Activated CD4-positive, alpha-beta T cell treated with anti-CD3 and anti-CD28 coated beads, Interleukin-2, amount 10 ng/mL, durations not matched to agents 24 days and 14 days (primary cell): ENCODE measurements at regions of chr12 and their contacts with region 1.

Region 1: DNA sequence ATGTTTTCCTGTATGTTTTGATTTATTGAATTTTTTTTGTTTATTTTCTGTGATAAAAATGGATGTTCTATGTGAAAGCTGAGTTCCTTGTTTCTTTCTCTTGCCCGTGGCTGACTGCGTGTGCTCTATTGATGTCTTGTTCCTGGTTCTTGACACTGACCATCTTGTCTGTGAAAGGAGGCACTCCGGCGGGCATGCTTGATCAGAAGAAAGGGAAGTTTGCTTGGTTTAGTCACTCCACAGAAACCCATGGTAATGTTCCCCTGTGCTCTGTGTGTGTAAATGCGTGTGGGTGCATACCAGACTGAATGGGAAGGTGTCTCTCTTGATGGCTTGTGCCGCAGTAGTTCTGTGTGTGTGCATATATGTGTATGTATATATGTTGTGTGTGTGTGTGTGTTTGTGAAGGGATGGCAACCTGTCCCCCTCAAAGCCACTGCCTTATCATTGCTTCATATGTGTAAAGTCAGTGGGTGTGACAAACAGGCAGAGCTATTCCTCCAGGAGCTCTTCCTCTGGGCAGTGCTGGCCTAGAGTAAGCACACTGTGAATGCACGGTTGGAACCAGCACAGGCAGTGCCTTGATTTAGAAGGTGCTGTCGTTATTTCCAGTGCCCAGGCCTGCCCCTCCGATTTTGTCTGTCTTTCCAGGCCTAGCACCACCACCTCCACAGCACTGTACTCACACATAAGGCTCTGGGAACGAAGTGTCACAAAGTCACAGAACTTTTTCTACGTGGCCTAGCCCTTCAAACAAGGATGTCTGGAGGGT is 247.3 kb upstream of the FKBP4 start:
- DNase-seq: no peak
- H3K4me3 Mint-ChIP-seq: no peak overlapping the region
- H3K27ac Mint-ChIP-seq: no peak overlapping the region
- H3K4me1 Mint-ChIP-seq: peaks cover 15% of the 10 kb centered on the region
- H3K27me3 Mint-ChIP-seq: no peaks in the 10 kb centered on the region

Region 2: DNA sequence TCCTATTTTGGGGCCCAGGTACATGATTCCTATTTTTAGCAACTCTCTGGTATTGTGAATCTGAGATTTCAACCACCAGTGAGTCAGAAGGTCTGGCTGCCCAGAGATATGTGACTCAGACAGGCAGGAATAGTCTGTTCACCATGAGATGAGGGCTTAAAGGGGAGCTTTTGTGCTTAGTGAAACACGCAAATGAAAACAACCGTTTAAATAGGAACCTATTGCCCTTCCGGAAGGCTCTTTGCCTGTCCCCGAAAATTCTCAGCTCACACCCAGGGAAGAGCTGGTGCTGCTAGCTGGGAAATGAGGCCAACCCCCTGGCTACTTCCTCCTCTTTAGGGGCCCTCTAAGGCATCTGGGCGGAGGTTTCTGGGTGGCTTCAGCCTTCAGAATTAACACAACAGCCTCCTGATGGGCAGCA is 211.0 kb before region 1 on chr12:
- intact Hi-C with region 1: no loop called
- DNase-seq: no peak
- H3K4me3 Mint-ChIP-seq: no peak overlapping the region
- H3K27ac Mint-ChIP-seq: no peak overlapping the region
- H3K4me1 Mint-ChIP-seq: peaks cover 3% of the 10 kb centered on the region
- H3K27me3 Mint-ChIP-seq: peaks cover 10% of the 10 kb centered on the region

Region 3: GRCh38 chr12:2387103-2387834 is 160.2 kb before region 1 on chr12:
- intact Hi-C with region 1: loop called (anchors 10 kb)
- DNase-seq: peak; percentile 64
- H3K4me3 Mint-ChIP-seq: no peak overlapping the region
- H3K27ac Mint-ChIP-seq: no peak overlapping the region
- H3K4me1 Mint-ChIP-seq: no peaks in the 10 kb centered on the region
- H3K27me3 Mint-ChIP-seq: peaks cover 20% of the 10 kb centered on the region